IMR-90 (cell line): ENCODE measurements at regions of chr4 and their contacts with region 1.

Region 1: DNA sequence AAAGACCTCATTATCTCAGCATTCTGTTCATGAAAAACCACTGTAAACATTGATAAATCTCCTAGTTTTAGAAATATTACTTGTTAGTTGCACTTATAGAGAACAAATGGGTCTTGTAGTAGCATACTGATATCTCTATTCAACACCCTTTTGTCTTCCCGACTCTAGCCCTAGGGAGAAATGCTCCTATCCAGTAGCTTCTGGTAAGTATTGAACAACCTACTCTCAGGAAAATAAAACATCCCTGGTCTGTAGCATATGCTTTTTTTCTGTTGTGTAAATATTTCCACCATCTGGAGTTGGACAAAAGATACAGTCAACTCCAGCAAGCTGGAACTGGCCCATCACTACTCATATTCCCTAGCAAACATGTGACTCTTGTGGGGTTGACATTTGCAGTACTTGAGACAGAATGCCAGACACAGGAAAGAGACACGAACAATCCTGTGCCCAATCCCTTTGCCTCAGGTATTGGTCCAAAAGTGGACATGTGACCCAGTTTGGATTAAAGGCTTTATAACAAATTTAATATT is 188.2 kb downstream of the GC start:
- DNase-seq: no peak
- ATAC-seq: peak; percentile 48; the same call in 1 of the 2 replicates
- H3K4me3 ChIP-seq: no peak overlapping the region
- H3K27ac ChIP-seq: no peak overlapping the region
- H3K4me1 ChIP-seq: peaks cover 1% of the 10 kb centered on the region; the same call in 1 of the 2 replicates
- H3K27me3 ChIP-seq: peaks cover 1% of the 10 kb centered on the region; the same call in 1 of the 2 replicates
- CTCF ChIP-seq: no peak
- POLR2A ChIP-seq: no peak
- RAD21 ChIP-seq: no peak

Region 2: DNA sequence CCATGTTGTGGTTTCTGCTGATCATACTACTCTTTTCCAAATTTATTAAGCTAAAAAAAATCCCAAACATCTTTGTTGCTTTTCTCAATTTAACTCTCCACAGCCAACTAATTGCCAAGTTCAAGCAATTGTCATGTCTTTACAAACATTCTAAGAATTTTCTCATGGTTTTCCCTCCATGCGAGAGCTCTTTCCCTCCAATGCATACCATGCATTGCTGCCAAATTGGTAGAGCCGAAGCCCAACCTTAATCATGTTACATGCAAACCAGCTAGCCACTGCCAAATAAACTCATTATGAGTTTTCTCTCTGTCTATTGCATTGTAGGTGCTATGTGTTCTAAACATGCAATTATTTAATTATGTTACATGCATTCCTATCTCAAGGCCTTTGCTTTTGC is 64.3 kb after region 1 on chr4:
- CTCF ChIA-PET with region 1: no interaction called
- POLR2A ChIA-PET with region 1: no interaction called
- dilution Hi-C with region 1: no loop called
- in situ Hi-C with region 1: loop called (anchors 10 kb)
- intact Hi-C with region 1: no loop called
- DNase-seq: no peak
- ATAC-seq: no peak
- H3K4me3 ChIP-seq: no peak overlapping the region
- H3K27ac ChIP-seq: no peak overlapping the region
- H3K4me1 ChIP-seq: no peaks in the 10 kb centered on the region
- H3K27me3 ChIP-seq: peaks cover 4% of the 10 kb centered on the region
- CTCF ChIP-seq: no peak
- POLR2A ChIP-seq: no peak
- RAD21 ChIP-seq: no peak